ENCODE measurements at regions of chr3 and their contacts with region 1.

Region 1: GRCh38 chr3:179156661-179157174 is 8.6 kb downstream of the PIK3CA start:
- DNase-seq: no peak
- ATAC-seq: no peak
- H3K4me3 ChIP-seq: no peak overlapping the region
- H3K4me3 Mint-ChIP-seq: no peak overlapping the region
- H3K27ac ChIP-seq: no peak overlapping the region
- H3K27ac Mint-ChIP-seq: no peak overlapping the region
- H3K4me1 ChIP-seq: peaks cover 2 to 20% of the 10 kb centered on the region in 2 experiments
- H3K4me1 Mint-ChIP-seq: peaks cover 79 to 82% (median 80%) of the 10 kb centered on the region in 3 donors
- H3K27me3 ChIP-seq: no peaks in the 10 kb centered on the region
- H3K27me3 Mint-ChIP-seq: no peaks in the 10 kb centered on the region

Region 2: GRCh38 chr3:179098388-179099077 is 58.2 kb before region 1 on chr3:
- CTCF ChIA-PET with region 1: no interaction called
- POLR2A ChIA-PET with region 1: interaction called in 1 of 2 experiments, 17 read pairs
- DNase-seq: no peak
- ATAC-seq: no peak
- H3K4me3 ChIP-seq: no peak overlapping the region
- H3K4me3 Mint-ChIP-seq: no peak overlapping the region
- H3K27ac ChIP-seq: no peak overlapping the region
- H3K27ac Mint-ChIP-seq: no peak overlapping the region
- H3K4me1 ChIP-seq: no peaks in the 10 kb centered on the region
- H3K4me1 Mint-ChIP-seq: no peaks in the 10 kb centered on the region
- H3K27me3 ChIP-seq: peaks cover 0 to 3% of the 10 kb centered on the region in 2 experiments
- H3K27me3 Mint-ChIP-seq: no peaks in the 10 kb centered on the region

Measured in T-cell (primary cell).